SK-N-SH (cell line): ENCODE measurements at regions of chr19 and their contacts with region 1.

Region 1: GRCh38 chr19:49570138-49570856 is 10.1 kb downstream of the NOSIP start:
- DNase-seq: peak; percentile 86
- H3K4me3 ChIP-seq: peak overlapping the region in 1 of 2 experiments; percentile 31; a peak in 1 of 4 replicates
- H3K27ac ChIP-seq: no peak overlapping the region; a peak in 1 of 4 replicates
- H3K4me1 ChIP-seq: peaks cover 7 to 12% of the 10 kb centered on the region in 2 experiments; a peak in 2 of 4 replicates
- H3K27me3 ChIP-seq: no peaks in the 10 kb centered on the region
- CTCF ChIP-seq: peak; percentile 99
- EP300 ChIP-seq: no peak
- RAD21 ChIP-seq: peak; percentile 87

Region 2: DNA sequence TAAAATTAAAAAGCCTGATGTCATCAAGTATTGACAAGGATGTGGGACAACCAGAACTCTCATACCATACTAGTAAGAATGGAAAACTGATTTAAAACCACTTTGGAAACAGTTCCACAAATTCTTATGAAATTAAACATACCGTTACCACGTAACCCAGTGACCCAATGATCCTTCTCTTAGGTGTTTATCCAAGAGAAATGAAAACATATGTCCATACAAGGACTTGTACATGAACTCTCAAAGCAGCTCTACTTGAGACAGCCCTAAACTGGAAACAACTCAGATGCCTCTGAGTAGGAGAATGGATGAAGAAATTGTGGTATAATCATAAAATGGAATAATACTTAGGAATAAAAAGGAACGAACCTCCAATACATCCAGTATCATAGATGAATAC is 272.9 kb before region 1 on chr19:
- CTCF ChIA-PET with region 1: no interaction called
- POLR2A ChIA-PET with region 1: no interaction called
- DNase-seq: no peak
- H3K4me3 ChIP-seq: no peak overlapping the region
- H3K27ac ChIP-seq: no peak overlapping the region
- H3K4me1 ChIP-seq: no peaks in the 10 kb centered on the region
- H3K27me3 ChIP-seq: peaks cover 6% of the 10 kb centered on the region; the same call in 1 of the 2 replicates
- CTCF ChIP-seq: no peak
- EP300 ChIP-seq: no peak
- RAD21 ChIP-seq: no peak

Region 3: DNA sequence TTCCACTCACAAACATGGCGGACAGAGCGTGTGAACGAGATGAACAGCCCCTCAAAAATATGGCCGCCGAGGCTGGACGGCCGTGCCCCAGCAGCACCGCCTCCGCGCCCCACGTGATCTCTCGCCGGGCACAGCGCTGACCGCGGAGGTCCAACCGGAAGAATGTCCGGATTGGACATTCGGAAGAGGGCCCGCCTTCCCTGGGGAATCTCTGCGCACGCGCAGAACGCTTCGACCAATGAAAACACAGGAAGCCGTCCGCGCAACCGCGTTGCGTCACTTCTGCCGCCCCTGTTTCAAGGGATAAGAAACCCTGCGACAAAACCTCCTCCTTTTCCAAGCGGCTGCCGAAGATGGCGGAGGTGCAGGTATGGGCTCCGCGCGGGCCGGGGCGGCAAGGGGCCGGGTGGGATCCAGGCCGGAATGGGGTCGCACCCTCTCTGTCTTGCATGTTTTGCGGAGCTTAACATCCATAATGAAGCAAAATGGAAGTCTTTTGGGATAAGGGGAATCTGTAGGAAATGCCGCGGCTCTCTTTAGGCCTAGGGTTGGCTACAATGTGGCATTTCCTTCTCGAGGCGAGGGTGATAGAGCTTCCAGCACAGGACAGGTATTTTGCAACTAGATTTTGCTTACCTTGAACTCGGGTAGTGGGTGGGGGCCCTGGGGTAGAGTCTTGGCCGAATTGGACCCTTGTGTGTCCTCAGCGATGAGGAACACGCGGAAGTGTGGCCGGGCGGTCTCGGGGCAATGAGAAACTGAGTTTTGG is 82.8 kb before region 1 on chr19 and contains the start of gene RPL13A:
- CTCF ChIA-PET with region 1: interaction called, 12 read pairs
- POLR2A ChIA-PET with region 1: no interaction called
- DNase-seq: peak; percentile 95
- H3K4me3 ChIP-seq: peak within 1 kb of the TSS; percentile 86 to 92
- H3K27ac ChIP-seq: peak within 1 kb of the TSS; percentile 80 to 88
- H3K4me1 ChIP-seq: peaks cover 0 to 21% of the 10 kb centered on the region in 2 experiments; a peak in 1 of 4 replicates
- H3K27me3 ChIP-seq: no peaks in the 10 kb centered on the region
- CTCF ChIP-seq: no peak
- EP300 ChIP-seq: no peak
- RAD21 ChIP-seq: no peak
- polyA plus RNA-seq, gene RPL13A: 2,604 and 2,748 TPM in 2 replicates

Region 4: GRCh38 chr19:49502866-49503581 is 67.3 kb before region 1 on chr19:
- CTCF ChIA-PET with region 1: interaction called, 28 read pairs
- POLR2A ChIA-PET with region 1: interaction called, 3 read pairs
- DNase-seq: peak; percentile 64
- H3K4me3 ChIP-seq: no peak overlapping the region
- H3K27ac ChIP-seq: no peak overlapping the region
- H3K4me1 ChIP-seq: peaks cover 3 to 18% of the 10 kb centered on the region in 2 experiments; a peak in 3 of 4 replicates
- H3K27me3 ChIP-seq: no peaks in the 10 kb centered on the region
- CTCF ChIP-seq: peak; percentile 71
- EP300 ChIP-seq: no peak
- RAD21 ChIP-seq: peak; percentile 74

Region 5: DNA sequence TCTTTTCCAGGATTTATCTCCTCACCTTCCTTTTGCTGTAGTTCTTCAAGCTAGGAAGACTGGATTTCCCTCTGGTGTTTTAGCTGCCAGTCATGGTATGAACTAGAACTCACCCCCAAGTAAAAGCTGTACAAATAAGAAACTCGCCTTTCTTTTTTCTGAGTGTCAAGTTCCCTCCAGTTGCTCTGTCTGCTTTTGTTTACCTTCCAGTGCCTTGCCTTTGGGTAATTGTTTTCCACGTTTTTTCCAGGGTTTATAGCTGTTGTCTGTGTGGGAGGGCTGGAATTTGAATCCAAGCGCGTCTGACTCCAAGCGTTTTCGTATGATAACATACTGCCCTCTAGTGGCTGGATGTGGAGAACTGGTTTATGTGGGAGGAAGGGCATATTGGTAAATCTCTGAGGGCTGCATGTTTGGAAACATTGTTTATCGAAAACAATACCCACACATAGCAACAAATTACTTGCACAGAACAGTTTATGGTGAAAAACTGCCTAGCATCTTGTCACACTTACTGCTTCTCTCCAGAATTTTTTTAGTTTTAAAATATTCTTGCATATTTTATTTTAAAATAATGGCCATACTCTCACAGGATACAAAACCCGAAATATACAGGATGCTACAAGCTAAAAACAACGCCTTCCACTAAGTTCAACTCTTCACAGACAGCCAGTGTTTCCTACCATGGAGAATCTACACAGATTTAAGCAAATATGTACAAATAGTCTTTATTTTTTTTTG is 23.3 kb before region 1 on chr19:
- CTCF ChIA-PET with region 1: interaction called, 87 read pairs
- POLR2A ChIA-PET with region 1: no interaction called
- DNase-seq: peak; percentile 83
- H3K4me3 ChIP-seq: peak overlapping the region in 1 of 2 experiments; percentile 33; a peak in 1 of 4 replicates
- H3K27ac ChIP-seq: no peak overlapping the region
- H3K4me1 ChIP-seq: no peaks in the 10 kb centered on the region
- H3K27me3 ChIP-seq: no peaks in the 10 kb centered on the region
- CTCF ChIP-seq: peak; percentile 87
- EP300 ChIP-seq: no peak
- RAD21 ChIP-seq: peak; percentile 94

Region 6: DNA sequence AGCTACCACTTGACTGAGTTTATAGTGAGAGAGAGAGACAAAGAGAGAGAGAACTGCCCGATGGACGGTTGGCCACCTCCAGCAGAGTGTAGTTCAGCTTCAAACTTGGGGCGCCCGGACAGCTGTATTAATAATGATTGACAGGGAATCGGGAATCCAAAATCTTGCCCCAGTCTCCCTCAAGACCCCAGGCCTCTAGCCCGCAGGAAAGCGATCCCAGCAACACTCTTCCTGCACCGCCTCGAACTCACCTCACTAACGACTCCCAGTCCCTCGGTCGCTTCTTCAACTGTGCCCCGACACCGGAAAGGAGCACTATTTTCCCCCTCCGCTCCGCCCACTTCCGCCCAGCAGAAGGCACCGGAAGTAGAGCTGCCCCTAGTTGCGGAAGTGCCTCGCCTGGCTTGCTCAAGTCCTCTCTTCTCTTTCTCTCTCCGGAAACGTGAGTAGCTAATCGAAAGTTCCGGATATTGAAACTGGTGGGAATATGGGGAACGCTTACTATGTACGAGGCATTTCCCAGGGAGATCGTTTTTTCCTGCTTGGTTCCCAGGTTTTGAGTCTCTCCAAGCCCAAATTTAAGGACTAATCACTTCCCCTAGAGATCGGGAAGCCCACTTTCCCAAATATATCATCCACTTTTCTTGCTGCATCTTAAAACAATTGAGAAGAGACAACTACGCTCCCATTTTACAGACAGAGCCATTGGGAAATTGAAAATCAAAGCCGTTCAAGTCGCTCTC is 10.1 kb after region 1 on chr19 and contains the start of gene NOSIP:
- CTCF ChIA-PET with region 1: interaction called, 65 read pairs
- POLR2A ChIA-PET with region 1: interaction called, 4 read pairs
- DNase-seq: peak; percentile 88
- H3K4me3 ChIP-seq: peak within 1 kb of the TSS; percentile 66 to 88
- H3K27ac ChIP-seq: peak within 1 kb of the TSS; percentile 50 to 69
- H3K4me1 ChIP-seq: peaks cover 0 to 13% of the 10 kb centered on the region in 2 experiments; a peak in 2 of 4 replicates
- H3K27me3 ChIP-seq: no peaks in the 10 kb centered on the region
- CTCF ChIP-seq: no peak
- EP300 ChIP-seq: no peak; a peak in 1 of 4 replicates
- RAD21 ChIP-seq: no peak
- polyA plus RNA-seq, gene NOSIP: 101 and 128 TPM in 2 replicates